K562 (cell line): ENCODE measurements at regions of chr10 and their contacts with region 1.

Region 1: GRCh38 chr10:116444527-116445142 is 17.0 kb downstream of the PNLIPRP3 start:
- DNase-seq: peak; percentile 27 to 46 (median 42)
- ATAC-seq: peak; percentile 82
- H3K4me3 ChIP-seq: no peak overlapping the region
- H3K27ac ChIP-seq: no peak overlapping the region
- H3K4me1 ChIP-seq: no peaks in the 10 kb centered on the region
- H3K27me3 ChIP-seq: no peaks in the 10 kb centered on the region
- CTCF ChIP-seq: peak; percentile 64 to 76 (median 75)
- EP300 ChIP-seq: no peak
- POLR2A ChIP-seq: no peak
- RAD21 ChIP-seq: peak; percentile 59 to 63

Region 2: DNA sequence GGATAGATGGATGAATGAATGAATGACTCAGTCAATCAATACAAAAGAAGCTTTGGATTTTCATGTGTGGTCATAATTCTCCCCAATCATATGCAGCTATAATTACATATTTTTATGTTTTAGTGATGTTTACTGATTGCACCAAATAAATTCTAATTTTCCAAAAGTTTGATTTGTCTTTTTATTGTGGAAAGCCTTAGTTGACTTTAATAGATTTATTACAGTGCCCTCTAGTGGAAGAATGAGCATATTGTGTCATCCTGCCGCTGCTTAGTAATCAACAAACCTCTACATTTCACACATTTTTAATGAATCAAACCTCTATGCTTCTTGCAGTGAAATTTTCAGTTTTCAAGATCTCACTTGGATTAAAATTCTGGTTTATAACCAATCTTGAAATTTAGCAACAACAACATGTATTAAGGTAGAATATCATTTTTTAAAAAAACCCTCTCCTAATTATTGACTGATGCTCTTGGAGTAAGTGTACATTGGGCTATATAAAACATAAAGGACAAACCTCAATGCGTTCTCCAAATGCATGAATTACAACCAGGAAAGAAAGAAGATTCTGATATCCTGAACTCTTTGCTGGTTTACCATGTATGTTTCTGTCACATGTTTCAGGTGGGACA is 45.5 kb after region 1 on chr10:
- CTCF ChIA-PET with region 1: no interaction called
- POLR2A ChIA-PET with region 1: no interaction called
- in situ Hi-C with region 1: no loop called
- intact Hi-C with region 1: loop called (anchors 1 kb)
- DNase-seq: peak; percentile 10 to 26 (median 16)
- ATAC-seq: no peak
- H3K4me3 ChIP-seq: no peak overlapping the region
- H3K27ac ChIP-seq: no peak overlapping the region
- H3K4me1 ChIP-seq: no peaks in the 10 kb centered on the region
- H3K27me3 ChIP-seq: no peaks in the 10 kb centered on the region
- CTCF ChIP-seq: peak; percentile 18 to 57 (median 22); a peak in 3 of 6 replicates
- EP300 ChIP-seq: no peak
- POLR2A ChIP-seq: no peak
- RAD21 ChIP-seq: peak; percentile 32 to 37

Region 3: GRCh38 chr10:116521404-116522290 is 77.0 kb after region 1 on chr10:
- CTCF ChIA-PET with region 1: interaction called, 8 read pairs
- POLR2A ChIA-PET with region 1: no interaction called
- in situ Hi-C with region 1: no loop called
- intact Hi-C with region 1: loop called (anchors 1 kb)
- DNase-seq: peak; percentile 13 to 33 (median 24)
- ATAC-seq: no peak
- H3K4me3 ChIP-seq: no peak overlapping the region
- H3K27ac ChIP-seq: no peak overlapping the region
- H3K4me1 ChIP-seq: no peaks in the 10 kb centered on the region
- H3K27me3 ChIP-seq: no peaks in the 10 kb centered on the region
- CTCF ChIP-seq: peak in 2 of 3 experiments; percentile 14 to 61; a peak in 4 of 6 replicates
- EP300 ChIP-seq: no peak
- POLR2A ChIP-seq: no peak
- RAD21 ChIP-seq: peak; percentile 30 to 32

Region 4: DNA sequence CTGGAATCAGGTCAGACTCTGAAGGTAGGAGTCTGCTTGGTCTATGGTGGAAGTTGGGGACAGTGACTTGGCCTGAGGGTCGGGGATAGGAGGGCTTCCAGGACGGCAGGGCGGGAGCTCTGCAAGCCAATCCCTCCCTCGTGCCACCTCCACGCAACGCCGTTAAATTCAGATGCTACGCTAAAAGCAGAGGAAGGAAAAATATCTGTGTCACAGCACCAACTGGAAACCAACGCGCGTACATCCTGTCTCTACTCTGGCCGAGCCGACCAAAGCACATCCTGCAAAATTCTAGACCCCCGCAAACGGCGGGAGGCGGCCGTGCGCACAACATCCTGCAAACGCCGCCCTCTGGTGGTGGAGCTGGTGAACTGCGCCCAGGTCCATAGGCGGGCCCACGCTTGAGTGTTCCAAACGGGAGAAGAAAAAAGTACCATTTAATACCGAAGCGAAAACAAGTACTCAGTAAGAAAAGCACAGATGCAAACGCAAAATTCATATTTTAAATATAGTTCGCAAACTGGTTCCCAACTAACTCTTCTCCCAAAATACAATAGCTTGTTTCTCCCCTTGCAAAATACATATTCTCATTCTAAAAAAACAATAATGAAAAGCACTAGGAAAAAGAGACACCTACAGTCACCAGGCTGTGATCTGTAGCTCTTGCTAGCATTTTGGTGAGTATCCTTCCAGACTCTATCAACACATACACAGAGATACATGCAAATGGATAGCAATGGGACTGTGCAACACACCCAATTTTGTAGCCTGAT is 343.4 kb after region 1 on chr10:
- CTCF ChIA-PET with region 1: interaction called, 4 read pairs
- POLR2A ChIA-PET with region 1: no interaction called
- in situ Hi-C with region 1: no loop called
- intact Hi-C with region 1: loop called (anchors 10 kb)
- DNase-seq: peak; percentile 49 to 68 (median 64)
- ATAC-seq: peak; percentile 91
- H3K4me3 ChIP-seq: no peak overlapping the region
- H3K27ac ChIP-seq: no peak overlapping the region
- H3K4me1 ChIP-seq: no peaks in the 10 kb centered on the region
- H3K27me3 ChIP-seq: 0 out of 5 replicates have a peak, but pooled peaks cover 0 to 6% of the 10 kb centered on the region in 2 experiments
- CTCF ChIP-seq: peak; percentile 68 to 93 (median 83)
- EP300 ChIP-seq: no peak
- POLR2A ChIP-seq: no peak
- RAD21 ChIP-seq: peak; percentile 54 to 67